ENCODE measurements at regions of chr9 and their contacts with region 1.

Region 1: GRCh38 chr9:136170006-136170901 is 34.7 kb downstream of the LHX3 start:
- DNase-seq: peak; percentile 66
- H3K4me3 ChIP-seq: no peak overlapping the region
- H3K27ac ChIP-seq: no peak overlapping the region
- H3K4me1 ChIP-seq: no peaks in the 10 kb centered on the region
- CTCF ChIP-seq: peak; percentile 90

Region 2: GRCh38 chr9:135907431-135908092 is 262.7 kb before region 1 on chr9 and contains the start of gene CAMSAP1:
- CTCF ChIA-PET with region 1: interaction called, 12 read pairs
- POLR2A ChIA-PET with region 1: no interaction called
- intact Hi-C with region 1: no loop called
- DNase-seq: peak; percentile 94
- H3K4me3 ChIP-seq: peak within 1 kb of the TSS; percentile 81
- H3K27ac ChIP-seq: peak within 1 kb of the TSS; percentile 26
- H3K4me1 ChIP-seq: peaks cover 45% of the 10 kb centered on the region
- CTCF ChIP-seq: no peak
- total RNA-seq, gene CAMSAP1: 20.1 and 30.4 TPM in 2 replicates

Region 3: GRCh38 chr9:135971892-135972291 is 198.4 kb before region 1 on chr9:
- CTCF ChIA-PET with region 1: no interaction called
- POLR2A ChIA-PET with region 1: no interaction called
- intact Hi-C with region 1: no loop called
- DNase-seq: peak; percentile 75
- H3K4me3 ChIP-seq: no peak overlapping the region
- H3K27ac ChIP-seq: no peak overlapping the region
- H3K4me1 ChIP-seq: peaks cover 4% of the 10 kb centered on the region
- CTCF ChIP-seq: no peak

Region 4: DNA sequence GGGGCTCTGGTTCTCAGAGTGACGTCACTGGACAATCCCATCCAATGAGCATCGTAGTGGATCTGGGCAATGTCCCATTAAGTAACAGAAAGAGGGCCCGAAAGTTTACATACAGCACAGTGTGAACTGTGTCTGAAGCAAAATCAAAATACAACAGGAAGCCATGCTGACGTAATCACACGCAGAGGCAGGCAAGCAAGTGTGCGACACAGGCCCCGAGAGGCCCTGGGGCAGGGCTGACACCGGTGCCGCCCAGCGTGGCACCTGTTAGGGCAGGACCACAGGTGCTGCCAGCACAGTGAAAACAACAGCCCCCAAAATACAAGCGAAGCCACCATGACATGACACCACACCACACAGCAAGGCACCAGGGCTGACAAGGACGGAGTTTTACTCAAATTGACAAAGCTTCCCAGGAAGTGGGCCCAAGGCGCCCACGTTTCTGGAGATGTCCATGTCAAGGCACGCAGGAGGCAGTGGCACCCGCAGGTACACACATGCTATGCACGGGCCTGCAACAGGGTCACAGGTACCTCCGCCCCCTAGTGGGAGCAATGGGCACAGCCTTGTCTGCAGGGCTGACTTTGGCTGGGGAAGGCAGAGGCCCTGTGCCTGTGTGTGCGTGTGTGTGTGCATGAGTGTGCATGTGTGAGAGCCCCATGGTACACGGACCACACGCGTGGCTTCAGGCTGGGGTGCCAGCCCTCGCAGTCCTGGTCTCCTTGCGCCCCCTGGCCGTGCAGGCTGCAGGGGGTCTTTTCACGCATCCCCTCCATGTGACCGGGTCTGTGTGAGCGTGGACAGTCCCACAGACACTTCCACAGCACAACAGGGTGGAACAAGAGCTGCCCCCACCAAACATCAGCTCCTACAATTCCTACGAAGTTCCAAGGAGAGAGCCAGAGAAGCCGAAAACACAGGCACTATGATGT is 55.8 kb after region 1 on chr9:
- CTCF ChIA-PET with region 1: no interaction called
- POLR2A ChIA-PET with region 1: no interaction called
- intact Hi-C with region 1: loop called (anchors 1 kb)
- DNase-seq: peak; percentile 90
- H3K4me3 ChIP-seq: peak overlapping the region; percentile 56
- H3K27ac ChIP-seq: peak overlapping the region; percentile 97
- H3K4me1 ChIP-seq: peaks cover 60% of the 10 kb centered on the region
- CTCF ChIP-seq: peak; percentile 93

Region 5: GRCh38 chr9:136244122-136244968 is 74.1 kb after region 1 on chr9:
- CTCF ChIA-PET with region 1: no interaction called
- POLR2A ChIA-PET with region 1: no interaction called
- intact Hi-C with region 1: loop called (anchors 1 kb)
- DNase-seq: peak; percentile 84
- H3K4me3 ChIP-seq: peak overlapping the region; percentile 98
- H3K27ac ChIP-seq: peak overlapping the region; percentile 86
- H3K4me1 ChIP-seq: peaks cover 59% of the 10 kb centered on the region
- CTCF ChIP-seq: no peak

Region 6: DNA sequence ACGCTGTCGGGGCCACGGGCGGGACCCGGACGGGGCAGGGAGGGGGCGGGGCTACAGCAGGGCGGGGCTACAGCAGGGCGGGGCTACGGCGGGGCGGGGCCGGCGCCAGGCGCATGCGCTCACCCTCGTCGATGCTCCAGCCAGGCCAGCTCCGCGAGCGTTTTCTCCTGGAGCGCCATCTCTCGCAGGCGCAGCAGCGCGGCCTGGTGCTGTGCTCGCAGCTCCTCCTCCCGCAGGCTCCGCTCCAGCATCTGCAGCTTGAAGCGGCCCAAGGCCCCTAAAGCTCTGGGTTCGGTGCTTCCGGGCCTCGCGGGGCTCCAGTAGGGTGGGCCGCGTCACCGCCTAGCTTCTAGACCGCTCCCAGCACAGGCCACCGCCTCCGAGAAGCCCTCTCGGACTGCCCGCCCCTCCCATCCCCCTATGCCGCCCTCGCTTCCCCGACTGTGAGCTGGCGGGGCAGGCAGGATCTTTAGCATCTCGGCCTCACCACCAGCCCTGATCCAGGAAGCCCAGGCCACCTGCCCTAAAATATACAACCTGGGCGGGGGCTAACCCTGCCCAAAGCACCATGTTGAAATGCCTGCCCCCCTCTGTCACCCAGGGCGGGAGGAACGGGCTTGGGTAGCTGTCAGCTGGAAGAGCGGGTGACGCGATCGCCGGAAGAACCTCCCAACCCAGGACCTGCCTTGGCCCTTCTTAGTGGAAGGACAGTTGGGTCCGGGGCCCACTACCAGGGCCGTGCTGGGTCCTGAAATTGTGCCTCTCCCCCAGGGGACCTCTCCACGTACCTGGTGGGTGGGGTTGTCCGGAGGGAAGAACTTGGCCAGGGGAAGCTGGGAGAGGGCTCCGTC is 97.2 kb after region 1 on chr9:
- CTCF ChIA-PET with region 1: no interaction called
- POLR2A ChIA-PET with region 1: no interaction called
- intact Hi-C with region 1: loop called (anchors 1 kb)
- DNase-seq: peak; percentile 90
- H3K4me3 ChIP-seq: peak overlapping the region; percentile 58
- H3K27ac ChIP-seq: no peak overlapping the region
- H3K4me1 ChIP-seq: peaks cover 9% of the 10 kb centered on the region
- CTCF ChIP-seq: peak; percentile 60

Region 7: DNA sequence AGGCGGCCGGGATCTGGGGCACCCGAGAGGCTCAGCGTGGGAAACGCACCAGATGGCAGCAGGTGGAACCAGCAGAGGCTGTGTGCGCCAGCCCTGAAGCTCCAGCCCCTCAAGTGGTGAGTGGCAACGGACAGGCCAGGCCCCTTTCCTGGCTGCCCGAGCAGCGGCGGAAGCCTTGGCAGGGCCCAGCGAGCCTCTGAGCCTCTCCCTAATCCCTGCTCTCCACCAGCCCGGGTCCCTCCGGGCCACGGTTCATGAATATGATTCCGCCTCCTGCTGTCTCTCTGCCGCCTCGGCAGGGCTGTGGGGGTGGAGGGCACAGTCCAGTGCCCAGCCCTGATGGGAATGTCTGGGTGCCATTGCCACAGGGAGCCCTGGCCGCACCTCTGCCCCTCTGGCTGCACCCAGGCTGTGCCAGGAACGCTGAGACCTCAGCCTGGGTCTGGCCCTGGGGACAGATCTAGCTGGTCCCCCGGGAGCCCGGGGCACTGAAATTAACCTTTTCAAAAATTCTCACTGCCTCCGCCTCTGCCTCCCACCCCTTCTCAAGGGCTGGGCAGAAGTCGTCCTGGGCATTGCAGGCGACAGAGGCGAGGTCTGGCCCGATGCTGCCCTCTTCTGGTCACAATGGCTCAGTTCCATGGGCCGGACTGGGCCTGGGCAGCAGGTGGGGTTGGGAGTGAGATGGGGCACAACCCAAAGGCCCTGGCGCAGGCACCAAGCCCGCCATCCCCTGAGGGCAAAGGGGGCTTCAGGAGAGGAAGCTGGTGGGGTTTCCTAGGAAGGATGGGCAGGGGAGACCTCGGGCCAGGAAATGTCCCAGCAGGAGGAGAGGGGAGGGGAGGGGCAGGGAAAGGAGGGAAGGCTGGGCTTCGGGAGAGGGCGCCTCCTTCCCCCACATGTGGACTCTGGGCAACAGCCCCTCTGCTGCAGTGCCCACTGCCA is 113.3 kb after region 1 on chr9:
- CTCF ChIA-PET with region 1: no interaction called
- POLR2A ChIA-PET with region 1: no interaction called
- intact Hi-C with region 1: loop called (anchors 1 kb)
- DNase-seq: peak; percentile 78
- H3K4me3 ChIP-seq: no peak overlapping the region
- H3K27ac ChIP-seq: no peak overlapping the region
- H3K4me1 ChIP-seq: peaks cover 20% of the 10 kb centered on the region
- CTCF ChIP-seq: peak; percentile 86